Activated naive CD4-positive, alpha-beta T cell treated with anti-CD3 and anti-CD28 coated beads for 36 hours (primary cell): ENCODE measurements at regions of chrX and their contacts with region 1.

Region 1: GRCh38 chrX:30577362-30577991 is at the start of gene TASL:
- DNase-seq: peak; percentile 48
- H3K4me3 Mint-ChIP-seq: peak within 1 kb of the TSS; percentile 82
- H3K27ac Mint-ChIP-seq: peak within 1 kb of the TSS; percentile 86
- H3K4me1 Mint-ChIP-seq: peaks cover 17% of the 10 kb centered on the region
- H3K27me3 Mint-ChIP-seq: no peaks in the 10 kb centered on the region
- total RNA-seq, gene TASL: 0.79 to 1.1 TPM

Region 2: DNA sequence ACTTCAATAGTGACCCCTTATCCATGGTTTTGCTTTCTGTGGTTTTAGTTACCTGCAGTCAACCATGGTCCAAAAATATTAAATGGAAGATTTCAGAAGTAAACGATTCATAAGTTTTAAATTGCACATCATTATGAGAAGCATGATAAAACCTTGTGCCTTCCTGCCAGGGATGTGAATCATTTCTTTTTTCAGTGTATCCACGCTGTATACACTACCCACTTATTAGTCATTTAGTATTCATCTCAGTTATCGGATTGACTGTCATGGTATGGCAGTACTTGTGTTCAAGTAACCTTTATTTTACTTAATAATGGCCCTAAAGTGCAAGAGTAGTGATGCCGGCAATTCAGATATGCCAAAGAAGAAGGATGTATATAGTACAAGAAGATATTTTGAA is 37.8 kb after region 1 on chrX:
- CTCF ChIA-PET with region 1: no interaction called
- intact Hi-C with region 1: loop called (anchors 1 kb)
- DNase-seq: no peak
- H3K4me3 Mint-ChIP-seq: no peak overlapping the region
- H3K27ac Mint-ChIP-seq: no peak overlapping the region
- H3K4me1 Mint-ChIP-seq: peaks cover 3% of the 10 kb centered on the region
- H3K27me3 Mint-ChIP-seq: no peaks in the 10 kb centered on the region

Region 3: GRCh38 chrX:30652527-30653414 is 75.3 kb after region 1 on chrX:
- CTCF ChIA-PET with region 1: interaction called, 4 read pairs
- intact Hi-C with region 1: loop called (anchors 1 kb)
- DNase-seq: peak; percentile 93
- H3K4me3 Mint-ChIP-seq: peak overlapping the region; percentile 90
- H3K27ac Mint-ChIP-seq: peak overlapping the region; percentile 93
- H3K4me1 Mint-ChIP-seq: peaks cover 31% of the 10 kb centered on the region
- H3K27me3 Mint-ChIP-seq: no peaks in the 10 kb centered on the region

Region 4: GRCh38 chrX:30659421-30659820 is 81.9 kb after region 1 on chrX:
- CTCF ChIA-PET with region 1: no interaction called
- intact Hi-C with region 1: loop called (anchors 2 kb)
- DNase-seq: no peak
- H3K4me3 Mint-ChIP-seq: peak overlapping the region; percentile 29
- H3K27ac Mint-ChIP-seq: peak overlapping the region; percentile 85
- H3K4me1 Mint-ChIP-seq: peaks cover 34% of the 10 kb centered on the region
- H3K27me3 Mint-ChIP-seq: no peaks in the 10 kb centered on the region

Region 5: GRCh38 chrX:30831082-30831481 is 253.6 kb after region 1 on chrX:
- CTCF ChIA-PET with region 1: no interaction called
- intact Hi-C with region 1: loop called (anchors 5 kb)
- DNase-seq: peak; percentile 48
- H3K4me3 Mint-ChIP-seq: no peak overlapping the region
- H3K27ac Mint-ChIP-seq: peak overlapping the region; percentile 12
- H3K4me1 Mint-ChIP-seq: peaks cover 34% of the 10 kb centered on the region
- H3K27me3 Mint-ChIP-seq: no peaks in the 10 kb centered on the region